Calu3 (cell line): ENCODE measurements at regions of chr3 and their contacts with region 1.

Region 1: GRCh38 chr3:149273096-149273751 is 51.6 kb upstream of the CP start:
- DNase-seq: peak; percentile 65
- H3K4me3 Mint-ChIP-seq: no peak overlapping the region
- H3K27ac Mint-ChIP-seq: no peak overlapping the region
- H3K4me1 Mint-ChIP-seq: peaks cover 53% of the 10 kb centered on the region
- H3K27me3 Mint-ChIP-seq: no peaks in the 10 kb centered on the region
- CTCF ChIP-seq: peak; percentile 98

Region 2: DNA sequence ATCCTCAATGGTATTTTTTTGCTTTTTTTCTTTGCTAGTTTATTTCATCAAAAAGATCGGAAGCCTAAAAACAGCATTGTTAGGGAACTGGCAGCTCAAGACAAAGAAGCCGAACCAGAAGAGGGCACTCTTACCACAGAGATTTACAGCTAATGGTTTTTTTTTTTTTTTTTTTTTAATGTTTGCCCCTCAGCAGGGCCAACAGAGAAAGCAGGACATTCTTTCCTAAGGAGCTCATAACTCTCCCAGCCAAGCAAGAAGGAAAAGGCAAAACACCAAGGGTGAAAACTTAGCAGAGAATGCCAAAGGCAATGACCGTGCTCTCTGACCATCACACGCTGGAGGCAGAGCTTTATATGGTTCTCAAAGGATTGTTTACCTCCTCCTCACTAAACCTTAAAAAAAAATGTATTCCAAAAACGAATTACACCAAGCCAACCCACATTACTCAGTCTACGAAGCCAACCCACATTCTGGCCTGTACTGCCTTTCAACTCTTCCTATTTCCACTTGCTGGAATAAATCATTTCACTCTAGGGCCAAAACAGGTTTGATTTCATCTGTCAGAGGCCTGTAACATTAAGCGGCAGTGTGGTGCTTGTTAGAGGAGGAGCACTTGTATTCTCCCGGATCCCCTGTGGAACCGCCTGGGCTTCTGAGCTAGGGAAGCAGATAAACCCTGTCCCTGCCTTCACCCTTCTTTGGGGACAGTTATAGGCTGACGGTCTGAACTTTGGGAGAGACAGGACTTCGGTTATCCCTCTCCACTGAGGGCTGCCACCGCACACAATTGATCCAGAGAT is 317.5 kb before region 1 on chr3:
- CTCF ChIA-PET with region 1: interaction called, 7 read pairs
- intact Hi-C with region 1: loop called (anchors 1 kb)
- DNase-seq: peak; percentile 74
- H3K4me3 Mint-ChIP-seq: no peak overlapping the region
- H3K27ac Mint-ChIP-seq: no peak overlapping the region
- H3K4me1 Mint-ChIP-seq: peaks cover 11% of the 10 kb centered on the region
- H3K27me3 Mint-ChIP-seq: peaks cover 12% of the 10 kb centered on the region
- CTCF ChIP-seq: peak; percentile 68

Region 3: GRCh38 chr3:149129326-149130205 is 143.7 kb before region 1 on chr3 and contains the start of gene HPS3:
- CTCF ChIA-PET with region 1: interaction called, 4 read pairs
- intact Hi-C with region 1: loop called (anchors 1 kb)
- DNase-seq: peak; percentile 98
- H3K4me3 Mint-ChIP-seq: peak within 1 kb of the TSS; percentile 94
- H3K27ac Mint-ChIP-seq: peak within 1 kb of the TSS; percentile 91
- H3K4me1 Mint-ChIP-seq: peaks cover 29% of the 10 kb centered on the region
- H3K27me3 Mint-ChIP-seq: no peaks in the 10 kb centered on the region
- CTCF ChIP-seq: peak; percentile 16
- total RNA-seq, gene HPS3: 46.4 and 49.5 TPM in 2 replicates

Region 4: GRCh38 chr3:149224736-149225594 is 48.3 kb before region 1 on chr3:
- CTCF ChIA-PET with region 1: no interaction called
- intact Hi-C with region 1: loop called (anchors 1 kb)
- DNase-seq: peak; percentile 73
- H3K4me3 Mint-ChIP-seq: peak overlapping the region; percentile 57
- H3K27ac Mint-ChIP-seq: peak overlapping the region; percentile 75
- H3K4me1 Mint-ChIP-seq: peaks cover 58% of the 10 kb centered on the region
- H3K27me3 Mint-ChIP-seq: no peaks in the 10 kb centered on the region
- CTCF ChIP-seq: no peak

Region 5: GRCh38 chr3:149480325-149481017 is 207.2 kb after region 1 on chr3:
- CTCF ChIA-PET with region 1: no interaction called
- intact Hi-C with region 1: loop called (anchors 2 kb)
- DNase-seq: peak; percentile 97
- H3K4me3 Mint-ChIP-seq: peak overlapping the region; percentile 6
- H3K27ac Mint-ChIP-seq: peak overlapping the region; percentile 99
- H3K4me1 Mint-ChIP-seq: peaks cover 64% of the 10 kb centered on the region
- H3K27me3 Mint-ChIP-seq: no peaks in the 10 kb centered on the region
- CTCF ChIP-seq: peak; percentile 96